Caco-2 (cell line): ENCODE measurements at regions of chr6 and their contacts with region 1.

Region 1: GRCh38 chr6:145547596-145548335 is 187.6 kb downstream of the EPM2A start:
- DNase-seq: no peak
- H3K4me3 ChIP-seq: no peak overlapping the region
- H3K4me3 Mint-ChIP-seq: no peak overlapping the region
- H3K27ac Mint-ChIP-seq: peak overlapping the region; percentile 28
- H3K4me1 ChIP-seq: peaks cover 24% of the 10 kb centered on the region
- H3K4me1 Mint-ChIP-seq: peaks cover 12% of the 10 kb centered on the region
- H3K27me3 ChIP-seq: no peaks in the 10 kb centered on the region
- H3K27me3 Mint-ChIP-seq: no peaks in the 10 kb centered on the region
- CTCF ChIP-seq: no peak

Region 2: DNA sequence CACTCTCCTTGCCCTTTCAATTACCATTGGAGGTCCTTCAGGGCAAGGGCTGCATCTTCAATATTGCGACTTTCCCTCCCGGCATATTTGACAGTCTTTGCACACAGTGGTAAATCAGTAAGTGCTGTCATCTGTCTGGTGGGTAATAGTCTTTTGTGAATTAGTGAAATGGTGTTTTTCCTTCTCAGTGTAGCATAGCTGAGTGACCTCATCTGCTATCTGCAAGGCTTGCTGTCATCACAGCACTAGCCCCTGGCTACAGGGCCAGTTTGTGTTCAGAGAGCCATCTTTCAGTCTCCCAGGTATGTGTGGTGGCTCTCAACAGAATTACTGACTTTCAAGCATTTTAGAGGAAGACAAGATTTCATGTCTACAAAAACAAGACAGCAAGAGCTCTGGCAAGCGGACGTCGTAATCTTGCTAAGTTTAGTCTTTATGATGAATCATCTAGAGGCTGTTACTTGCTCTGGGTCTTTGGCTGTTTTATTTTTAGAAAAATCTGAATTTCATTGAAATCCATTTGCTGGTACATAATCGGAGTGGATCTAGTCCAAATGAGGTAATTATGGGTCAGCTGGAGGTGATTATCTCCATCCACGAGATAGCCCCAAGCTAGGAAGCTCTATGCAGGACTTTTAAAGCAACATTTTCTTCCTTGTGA is 341.4 kb before region 1 on chr6:
- CTCF ChIA-PET with region 1: no interaction called
- POLR2A ChIA-PET with region 1: no interaction called
- intact Hi-C with region 1: no loop called
- DNase-seq: no peak
- H3K4me3 ChIP-seq: no peak overlapping the region
- H3K4me3 Mint-ChIP-seq: no peak overlapping the region
- H3K27ac Mint-ChIP-seq: no peak overlapping the region
- H3K4me1 ChIP-seq: no peaks in the 10 kb centered on the region
- H3K4me1 Mint-ChIP-seq: no peaks in the 10 kb centered on the region
- H3K27me3 ChIP-seq: no peaks in the 10 kb centered on the region
- H3K27me3 Mint-ChIP-seq: no peaks in the 10 kb centered on the region
- CTCF ChIP-seq: no peak

Region 3: DNA sequence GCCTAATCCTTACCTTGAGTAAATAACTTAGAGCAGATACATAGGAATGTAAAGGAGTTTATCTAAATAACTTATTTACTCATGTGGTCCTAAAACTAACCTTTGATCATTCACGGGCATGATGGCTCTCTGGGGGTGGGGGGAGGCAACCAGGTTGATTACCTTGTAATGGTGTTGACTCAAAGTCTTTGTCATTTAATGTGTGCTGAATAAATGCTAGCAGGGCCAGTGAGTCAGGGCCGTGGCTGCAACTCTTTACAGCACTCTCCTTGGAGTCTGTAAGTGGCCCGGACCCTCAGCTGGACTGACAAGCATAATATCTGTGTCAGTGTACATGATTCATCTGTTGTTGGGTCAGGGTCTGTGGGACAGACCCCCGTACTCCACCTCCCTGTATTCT is 15.4 kb before region 1 on chr6:
- CTCF ChIA-PET with region 1: no interaction called
- POLR2A ChIA-PET with region 1: no interaction called
- intact Hi-C with region 1: loop called (anchors 2 kb)
- DNase-seq: peak; percentile 68 to 81
- H3K4me3 ChIP-seq: no peak overlapping the region
- H3K4me3 Mint-ChIP-seq: no peak overlapping the region
- H3K27ac Mint-ChIP-seq: no peak overlapping the region
- H3K4me1 ChIP-seq: peaks cover 24% of the 10 kb centered on the region
- H3K4me1 Mint-ChIP-seq: no peaks in the 10 kb centered on the region
- H3K27me3 ChIP-seq: no peaks in the 10 kb centered on the region
- H3K27me3 Mint-ChIP-seq: no peaks in the 10 kb centered on the region
- CTCF ChIP-seq: no peak